PC-9 (cell line): ENCODE measurements at regions of chr17 and their contacts with region 1.

Region 1: DNA sequence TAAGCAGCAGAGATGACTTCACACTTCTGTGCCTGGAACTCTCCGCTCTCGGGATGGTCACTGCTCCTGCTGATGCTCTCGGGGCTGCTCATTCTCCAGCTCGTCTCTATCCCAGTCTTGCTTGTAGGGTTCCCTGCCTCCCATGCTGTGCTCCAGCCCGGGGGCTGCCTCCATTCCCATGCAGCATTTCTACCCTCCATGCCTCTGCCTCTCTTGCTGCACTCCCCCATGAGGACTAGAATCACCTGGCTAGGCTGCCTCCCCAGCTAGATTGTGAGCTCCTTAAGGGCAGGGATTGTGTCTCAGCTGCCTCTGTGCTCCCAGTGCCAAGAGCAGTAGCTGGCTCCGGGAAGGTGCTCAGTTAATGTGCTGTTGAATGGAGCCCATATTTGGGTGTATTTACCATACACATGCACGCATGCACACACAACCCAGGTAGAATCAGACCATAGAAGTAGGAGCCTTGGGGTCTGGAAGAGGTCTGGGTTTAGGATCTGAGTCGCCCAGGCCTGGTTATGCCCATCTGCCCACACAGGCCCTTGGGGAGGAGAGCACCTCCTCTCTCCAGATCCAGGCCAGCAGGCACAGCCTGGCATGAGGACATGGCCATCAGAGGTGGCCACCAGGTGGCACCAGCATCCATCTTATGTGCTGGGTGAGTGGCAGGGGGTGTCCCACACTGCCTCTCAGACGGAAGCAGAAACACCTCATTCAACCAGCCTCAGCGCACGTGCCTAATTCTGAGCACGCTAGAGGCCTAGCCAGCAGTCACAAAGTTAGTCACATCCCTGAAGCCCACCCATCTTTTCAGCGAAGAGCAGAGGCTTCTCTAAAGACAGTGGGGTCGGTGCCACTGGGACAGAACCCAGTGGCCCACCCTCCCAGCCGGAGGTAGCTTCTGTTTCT is 9.3 kb downstream of the GIT1 start:
- DNase-seq: peak; percentile 69 to 83
- H3K4me3 ChIP-seq: no peak overlapping the region
- H3K27ac ChIP-seq: no peak overlapping the region
- H3K4me1 ChIP-seq: no peaks in the 10 kb centered on the region
- H3K27me3 ChIP-seq: no peaks in the 10 kb centered on the region
- CTCF ChIP-seq: peak; percentile 87

Region 2: GRCh38 chr17:29433541-29433940 is 146.6 kb before region 1 on chr17:
- CTCF ChIA-PET with region 1: no interaction called
- POLR2A ChIA-PET with region 1: no interaction called
- intact Hi-C with region 1: no loop called
- DNase-seq: no peak
- H3K4me3 ChIP-seq: no peak overlapping the region
- H3K27ac ChIP-seq: no peak overlapping the region
- H3K4me1 ChIP-seq: no peaks in the 10 kb centered on the region
- H3K27me3 ChIP-seq: no peaks in the 10 kb centered on the region
- CTCF ChIP-seq: no peak

Region 3: GRCh38 chr17:29504711-29505110 is 75.4 kb before region 1 on chr17:
- CTCF ChIA-PET with region 1: interaction called, 14 read pairs
- POLR2A ChIA-PET with region 1: no interaction called
- intact Hi-C with region 1: no loop called
- DNase-seq: no peak
- H3K4me3 ChIP-seq: no peak overlapping the region
- H3K27ac ChIP-seq: no peak overlapping the region
- H3K4me1 ChIP-seq: no peaks in the 10 kb centered on the region
- H3K27me3 ChIP-seq: no peaks in the 10 kb centered on the region
- CTCF ChIP-seq: no peak

Region 4: GRCh38 chr17:30021708-30022317 is 441.7 kb after region 1 on chr17:
- CTCF ChIA-PET with region 1: interaction called, 3 read pairs
- POLR2A ChIA-PET with region 1: no interaction called
- intact Hi-C with region 1: loop called (anchors 2 kb)
- DNase-seq: peak in 1 of 2 experiments; percentile 14
- H3K4me3 ChIP-seq: no peak overlapping the region
- H3K27ac ChIP-seq: no peak overlapping the region
- H3K4me1 ChIP-seq: no peaks in the 10 kb centered on the region; the same call in 1 of the 2 replicates
- H3K27me3 ChIP-seq: no peaks in the 10 kb centered on the region
- CTCF ChIP-seq: peak; percentile 93